Testis (tissue), 5 donors: ENCODE measurements at regions of chr14 and their contacts with region 1.

Region 1: GRCh38 chr14:30974628-30975027 is 50.8 kb upstream of the AP4S1 start:
- DNase-seq: no peak
- H3K4me3 ChIP-seq: no peak overlapping the region
- H3K27ac ChIP-seq: no peak overlapping the region
- H3K4me1 ChIP-seq: no peaks in the 10 kb centered on the region
- H3K27me3 ChIP-seq: no peaks in the 10 kb centered on the region
- CTCF ChIP-seq: no peak
- POLR2A ChIP-seq: no peak

Region 2: DNA sequence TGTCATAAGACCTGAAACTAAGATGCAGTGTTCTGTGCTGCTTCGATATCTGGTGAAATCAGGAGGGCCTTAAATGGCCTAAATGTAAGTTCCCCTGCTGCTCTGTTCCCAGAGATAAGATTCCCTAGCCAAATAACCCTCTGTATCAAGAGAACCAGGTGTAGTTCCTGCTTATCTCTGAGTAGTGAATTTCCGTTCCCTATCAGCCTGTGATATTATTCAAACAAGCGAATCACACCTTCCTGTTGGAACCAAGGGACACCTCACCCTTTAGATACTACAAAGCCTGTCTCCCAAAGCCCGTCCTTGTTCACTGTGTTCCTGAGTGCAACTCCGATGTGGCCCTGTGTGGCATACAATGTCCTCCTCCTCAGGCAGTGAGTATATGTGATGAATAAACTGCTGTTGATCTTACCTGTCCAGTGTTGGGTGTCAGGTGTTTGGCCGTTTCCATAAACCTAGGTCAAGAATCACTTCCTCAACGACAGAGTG is 152.5 kb before region 1 on chr14:
- intact Hi-C with region 1: no loop called
- DNase-seq: no peak
- H3K4me3 ChIP-seq: no peak overlapping the region
- H3K27ac ChIP-seq: no peak overlapping the region
- H3K4me1 ChIP-seq: no peaks in the 10 kb centered on the region
- H3K27me3 ChIP-seq: no peaks in the 10 kb centered on the region
- CTCF ChIP-seq: no peak
- POLR2A ChIP-seq: no peak

Region 3: GRCh38 chr14:31084385-31084784 is 109.8 kb after region 1 on chr14:
- intact Hi-C with region 1: loop called (anchors 10 kb)
- DNase-seq: no peak
- H3K4me3 ChIP-seq: no peak overlapping the region
- H3K27ac ChIP-seq: no peak overlapping the region
- H3K4me1 ChIP-seq: no peaks in the 10 kb centered on the region
- H3K27me3 ChIP-seq: no peaks in the 10 kb centered on the region
- CTCF ChIP-seq: no peak
- POLR2A ChIP-seq: no peak